WTC11 (cell line): ENCODE measurements at regions of chr17 and their contacts with region 1.

Region 1: DNA sequence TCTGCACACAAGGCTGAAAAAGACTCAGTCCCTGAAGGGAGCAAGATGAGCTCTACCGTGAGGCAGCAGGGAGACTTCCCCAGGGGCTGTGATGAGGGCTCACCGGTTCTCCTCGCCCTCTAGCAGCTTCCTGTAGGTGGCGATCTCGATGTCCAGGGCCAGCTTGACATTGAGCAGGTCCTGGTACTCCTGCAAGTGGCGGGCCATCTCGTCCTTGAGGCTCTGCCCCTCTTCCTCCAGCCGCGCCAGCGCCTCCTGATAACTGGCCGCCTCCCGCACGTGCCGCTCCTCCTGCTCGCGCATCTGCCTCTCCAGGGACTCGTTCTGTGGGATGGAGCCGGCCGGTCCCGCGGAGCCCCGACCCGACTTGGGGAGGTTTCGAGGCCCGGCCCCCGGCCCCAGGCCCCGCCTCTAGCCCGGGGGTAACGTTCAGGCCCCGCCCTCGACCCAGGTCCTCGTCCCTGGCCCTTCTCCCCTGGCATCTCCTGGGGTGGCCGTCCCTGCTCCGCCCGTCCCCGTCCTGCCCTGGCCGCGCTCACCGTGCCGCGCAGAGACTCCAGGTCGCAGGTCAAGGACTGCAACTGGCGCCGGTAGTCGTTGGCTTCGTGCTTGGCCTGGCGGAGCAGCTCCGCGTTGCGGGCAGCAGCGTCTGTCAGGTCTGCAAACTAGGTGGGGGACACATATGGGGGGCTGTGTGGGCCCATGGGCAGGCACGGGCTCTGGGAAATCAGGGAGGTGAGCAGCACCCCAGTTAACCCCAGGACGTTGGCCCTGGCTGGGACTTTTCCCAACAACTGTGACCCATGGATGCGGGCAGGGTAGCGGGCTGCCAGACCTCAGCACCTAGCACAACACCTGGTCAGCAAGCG is 3.9 kb downstream of the GFAP start:
- DNase-seq: peak; percentile 83
- ATAC-seq: peak; percentile 91
- H3K4me3 Mint-ChIP-seq: peak overlapping the region; percentile 66
- H3K27ac Mint-ChIP-seq: no peak overlapping the region
- H3K4me1 Mint-ChIP-seq: peaks cover 7% of the 10 kb centered on the region
- H3K27me3 Mint-ChIP-seq: peaks cover 41% of the 10 kb centered on the region
- CTCF ChIP-seq: peak; percentile 13; the same call in 1 of the 2 replicates

Region 2: DNA sequence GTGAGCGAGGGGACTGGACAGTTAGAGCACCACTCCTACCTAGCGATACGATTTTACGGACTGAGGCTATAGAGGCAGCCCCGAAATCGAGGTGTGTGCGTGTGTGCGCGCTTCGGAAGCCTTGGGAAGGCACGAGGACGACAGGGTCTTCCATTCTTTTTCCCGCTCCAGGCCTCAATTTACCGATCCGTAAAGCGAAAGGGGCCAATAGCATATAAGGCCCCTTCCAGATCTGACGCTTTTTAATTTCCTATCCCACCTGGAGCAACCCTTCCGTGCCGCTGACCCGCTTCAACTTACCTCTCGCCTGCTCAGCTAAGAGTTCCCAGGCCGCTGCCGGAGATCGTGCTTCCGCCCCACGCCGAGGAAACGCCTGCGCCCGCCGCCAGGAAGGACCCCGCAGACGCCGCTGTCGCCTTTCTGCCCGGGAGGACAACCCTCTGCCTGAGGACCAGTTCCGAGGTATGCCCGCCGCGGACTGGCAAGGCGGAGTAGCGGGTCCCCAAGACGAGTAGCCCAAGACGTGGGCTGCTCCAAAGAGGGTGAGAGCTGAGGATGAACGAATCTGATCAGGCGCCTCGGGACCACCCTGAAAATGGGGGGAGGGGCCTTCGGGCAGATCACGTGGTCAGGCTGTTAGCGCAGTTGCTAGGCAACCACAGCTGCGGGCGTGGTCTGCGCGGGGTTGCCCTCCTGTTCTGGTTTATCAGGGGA is 12.1 kb before region 1 on chr17 and contains the start of gene EFTUD2:
- CTCF ChIA-PET with region 1: interaction called, 29 read pairs
- POLR2A ChIA-PET with region 1: interaction called, 5 read pairs
- DNase-seq: peak; percentile 89
- ATAC-seq: peak; percentile 85
- H3K4me3 Mint-ChIP-seq: peak within 1 kb of the TSS; percentile 88
- H3K27ac Mint-ChIP-seq: peak within 1 kb of the TSS; percentile 100
- H3K4me1 Mint-ChIP-seq: peaks cover 12% of the 10 kb centered on the region
- H3K27me3 Mint-ChIP-seq: no peaks in the 10 kb centered on the region; the same call in 1 of the 2 replicates
- CTCF ChIP-seq: no peak
- total RNA-seq, gene EFTUD2: 128 to 162 TPM (median 148 TPM) in 3 replicates

Region 3: GRCh38 chr17:44961921-44962350 is 50.6 kb after region 1 on chr17:
- CTCF ChIA-PET with region 1: interaction called, 10 read pairs
- POLR2A ChIA-PET with region 1: no interaction called
- DNase-seq: peak; percentile 54
- ATAC-seq: peak; percentile 85
- H3K4me3 Mint-ChIP-seq: no peak overlapping the region
- H3K27ac Mint-ChIP-seq: no peak overlapping the region
- H3K4me1 Mint-ChIP-seq: peaks cover 12% of the 10 kb centered on the region
- H3K27me3 Mint-ChIP-seq: peaks cover 58% of the 10 kb centered on the region
- CTCF ChIP-seq: no peak

Region 4: DNA sequence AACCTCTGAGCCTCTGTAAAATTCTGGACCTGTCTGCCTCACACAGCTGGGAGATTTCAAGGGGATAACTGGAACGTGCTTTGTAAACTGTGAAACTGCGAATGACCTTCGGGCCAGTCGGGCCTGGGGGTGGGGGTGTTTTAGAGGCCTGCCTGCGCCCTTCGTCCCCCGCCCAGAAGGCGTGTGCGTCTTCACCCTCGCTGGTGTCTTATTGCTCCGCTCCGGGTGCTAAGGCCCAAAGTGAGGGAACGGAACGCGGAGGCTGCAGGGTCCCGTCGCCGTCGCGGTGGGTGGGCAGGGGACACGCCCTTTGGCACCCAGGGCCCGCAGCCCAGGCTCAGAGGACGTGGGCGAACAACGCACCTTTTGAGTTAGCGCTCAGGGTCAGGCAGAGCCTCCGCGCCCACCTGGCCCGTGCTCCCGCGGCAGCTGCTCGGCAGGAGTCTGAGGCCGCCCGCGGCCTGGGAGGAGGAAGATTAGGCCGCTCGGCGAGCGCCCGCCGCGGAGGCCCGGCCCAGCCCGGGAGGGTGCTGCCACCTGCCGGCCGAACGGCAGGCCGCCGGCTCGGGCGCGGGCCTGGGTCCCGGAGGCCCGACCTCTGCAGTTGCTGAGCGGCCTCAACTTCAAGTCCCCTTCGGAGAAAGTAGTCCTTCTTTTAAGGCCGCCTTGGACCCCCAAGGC is 110.4 kb after region 1 on chr17:
- CTCF ChIA-PET with region 1: interaction called, 64 read pairs
- POLR2A ChIA-PET with region 1: no interaction called
- DNase-seq: peak; percentile 72
- ATAC-seq: peak; percentile 62
- H3K4me3 Mint-ChIP-seq: peak overlapping the region; percentile 66
- H3K27ac Mint-ChIP-seq: no peak overlapping the region
- H3K4me1 Mint-ChIP-seq: peaks cover 28% of the 10 kb centered on the region
- H3K27me3 Mint-ChIP-seq: peaks cover 42% of the 10 kb centered on the region
- CTCF ChIP-seq: peak; percentile 85